Naive thymus-derived CD4-positive, alpha-beta T cell (primary cell): ENCODE measurements at regions of chr11 and their contacts with region 1.

Region 1: GRCh38 chr11:118198370-118198769 is 21.9 kb upstream of the SCN2B start:
- DNase-seq: peak; percentile 66 to 82 (median 75)
- ATAC-seq: peak; percentile 80
- H3K4me3 ChIP-seq: no peak overlapping the region
- H3K4me3 Mint-ChIP-seq: peak overlapping the region in 7 of 10 donors; percentile 12 to 53 (median 38)
- H3K27ac ChIP-seq: peak overlapping the region; percentile 10
- H3K27ac Mint-ChIP-seq: peak overlapping the region; percentile 16 to 84 (median 76)
- H3K4me1 ChIP-seq: peaks cover 28 to 47% of the 10 kb centered on the region in 2 donors
- H3K4me1 Mint-ChIP-seq: peaks cover 5 to 14% (median 11%) of the 10 kb centered on the region in 7 donors
- H3K27me3 ChIP-seq: no peaks in the 10 kb centered on the region
- H3K27me3 Mint-ChIP-seq: no peaks in the 10 kb centered on the region

Region 2: DNA sequence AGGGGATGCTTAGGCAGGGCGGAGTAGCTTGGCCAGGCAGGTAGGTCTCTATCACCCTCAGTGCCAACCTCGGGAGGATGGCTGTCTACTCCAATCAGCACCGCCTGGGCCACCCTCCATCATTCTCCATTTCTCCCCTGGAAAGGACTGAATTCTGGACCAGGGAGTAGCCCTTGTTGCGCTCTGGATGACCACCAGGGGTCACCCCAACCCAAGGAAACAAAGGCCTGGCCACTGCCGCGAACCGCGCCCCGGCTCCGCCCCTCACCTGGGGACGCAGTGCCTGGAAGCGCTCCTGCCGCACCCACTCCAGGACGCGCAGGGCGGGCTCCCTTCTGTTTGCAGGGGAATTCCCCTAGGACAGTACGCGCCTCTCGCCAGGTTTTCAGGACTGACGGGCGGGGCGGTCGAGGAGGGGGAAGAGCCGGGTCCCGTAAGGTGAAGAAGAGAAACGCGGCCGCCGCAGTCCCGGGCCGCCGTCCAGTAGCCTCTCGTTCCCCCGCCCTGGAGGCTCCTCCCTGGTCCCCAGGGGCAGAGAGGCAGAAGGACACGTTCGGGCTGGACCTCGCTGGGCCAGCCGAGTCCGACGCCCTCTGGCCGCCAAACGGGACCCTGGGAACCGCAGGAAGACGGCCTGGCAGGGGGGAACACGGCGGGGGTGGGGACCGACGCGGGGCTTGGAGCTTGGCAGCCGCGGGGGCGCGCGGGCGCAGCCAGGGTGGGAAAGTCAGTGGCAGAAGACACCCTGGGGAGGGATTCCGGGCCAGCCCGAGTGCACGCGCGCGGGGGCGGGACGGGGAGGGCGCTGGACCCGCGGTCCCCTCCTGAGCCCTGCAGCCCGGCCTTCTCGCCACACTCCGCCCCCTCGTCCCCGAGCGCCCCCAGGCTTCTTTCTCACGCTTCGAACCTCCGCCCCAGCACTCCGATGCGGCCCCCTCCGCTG is 52.8 kb before region 1 on chr11:
- CTCF ChIA-PET with region 1: no interaction called
- POLR2A ChIA-PET with region 1: no interaction called
- intact Hi-C with region 1: loop called in 1 of 2 experiments (anchors 1 kb)
- DNase-seq: peak; percentile 76 to 93 (median 81)
- ATAC-seq: peak; percentile 95
- H3K4me3 ChIP-seq: peak overlapping the region; percentile 66
- H3K4me3 Mint-ChIP-seq: peak overlapping the region; percentile 43 to 88 (median 83)
- H3K27ac ChIP-seq: no peak overlapping the region
- H3K27ac Mint-ChIP-seq: peak overlapping the region in 1 of 9 donors; percentile 35
- H3K4me1 ChIP-seq: no peaks in the 10 kb centered on the region
- H3K4me1 Mint-ChIP-seq: peaks cover 0 to 20% (median 5%) of the 10 kb centered on the region in 7 donors
- H3K27me3 ChIP-seq: peaks cover 0 to 5% of the 10 kb centered on the region in 2 donors
- H3K27me3 Mint-ChIP-seq: peaks cover 45 to 78% (median 56%) of the 10 kb centered on the region in 5 donors

Region 3: DNA sequence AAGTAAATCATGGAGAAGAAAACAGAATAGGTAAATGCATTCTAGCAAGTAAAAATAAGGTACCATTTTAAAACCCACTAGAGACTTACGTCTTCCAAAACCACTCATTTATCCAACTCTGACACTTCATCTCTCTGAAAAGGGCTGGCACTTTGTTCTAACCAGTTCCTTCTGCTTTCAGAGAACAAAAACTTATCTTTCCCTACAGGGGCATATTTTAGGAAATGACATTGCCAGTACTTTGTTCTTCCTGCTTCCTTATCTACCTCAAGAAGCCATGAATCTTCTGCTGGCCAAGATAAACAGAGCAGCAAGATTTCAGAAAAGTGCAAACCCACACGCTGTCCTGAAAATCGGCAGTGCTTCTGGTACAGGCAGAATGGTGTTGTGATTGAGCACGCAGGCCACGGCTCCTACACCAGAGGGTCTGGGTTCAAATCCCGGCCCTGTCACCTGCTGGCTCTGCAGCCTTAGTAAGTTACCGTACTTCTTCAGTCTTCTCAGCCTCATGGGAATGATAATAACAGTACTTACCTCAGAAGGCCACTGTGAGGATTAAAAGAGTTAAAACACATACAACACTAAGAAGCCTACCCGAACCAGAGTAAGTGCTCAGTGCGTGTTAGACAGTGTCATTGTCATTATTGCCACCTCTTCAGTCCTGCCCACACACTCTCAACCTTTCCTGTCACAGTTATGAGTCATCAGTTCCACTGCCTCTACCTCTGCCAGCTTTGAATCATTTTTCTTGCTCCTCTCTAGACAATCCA is 42.8 kb after region 1 on chr11:
- CTCF ChIA-PET with region 1: interaction called, 7 read pairs
- POLR2A ChIA-PET with region 1: interaction called, 4 read pairs
- intact Hi-C with region 1: loop called in 1 of 2 experiments (anchors 1 kb)
- DNase-seq: peak in 4 of 9 donors; percentile 45 to 75 (median 53)
- ATAC-seq: peak; percentile 91
- H3K4me3 ChIP-seq: peak overlapping the region; percentile 8
- H3K4me3 Mint-ChIP-seq: peak overlapping the region; percentile 27 to 74 (median 54)
- H3K27ac ChIP-seq: peak overlapping the region; percentile 49
- H3K27ac Mint-ChIP-seq: peak overlapping the region; percentile 52 to 93 (median 83)
- H3K4me1 ChIP-seq: peaks cover 33 to 50% of the 10 kb centered on the region in 2 donors
- H3K4me1 Mint-ChIP-seq: peaks cover 54 to 76% (median 70%) of the 10 kb centered on the region in 7 donors
- H3K27me3 ChIP-seq: no peaks in the 10 kb centered on the region
- H3K27me3 Mint-ChIP-seq: no peaks in the 10 kb centered on the region

Region 4: GRCh38 chr11:118277306-118277705 is 78.9 kb after region 1 on chr11:
- CTCF ChIA-PET with region 1: interaction called, 10 read pairs
- POLR2A ChIA-PET with region 1: interaction called, 4 read pairs
- intact Hi-C with region 1: no loop called
- DNase-seq: no peak
- ATAC-seq: no peak
- H3K4me3 ChIP-seq: no peak overlapping the region
- H3K4me3 Mint-ChIP-seq: no peak overlapping the region
- H3K27ac ChIP-seq: no peak overlapping the region
- H3K27ac Mint-ChIP-seq: no peak overlapping the region
- H3K4me1 ChIP-seq: peaks cover 0 to 5% of the 10 kb centered on the region in 2 donors
- H3K4me1 Mint-ChIP-seq: peaks cover 6 to 57% (median 30%) of the 10 kb centered on the region in 7 donors
- H3K27me3 ChIP-seq: no peaks in the 10 kb centered on the region
- H3K27me3 Mint-ChIP-seq: peaks cover 0 to 3% (median 0%) of the 10 kb centered on the region in 5 donors

Region 5: DNA sequence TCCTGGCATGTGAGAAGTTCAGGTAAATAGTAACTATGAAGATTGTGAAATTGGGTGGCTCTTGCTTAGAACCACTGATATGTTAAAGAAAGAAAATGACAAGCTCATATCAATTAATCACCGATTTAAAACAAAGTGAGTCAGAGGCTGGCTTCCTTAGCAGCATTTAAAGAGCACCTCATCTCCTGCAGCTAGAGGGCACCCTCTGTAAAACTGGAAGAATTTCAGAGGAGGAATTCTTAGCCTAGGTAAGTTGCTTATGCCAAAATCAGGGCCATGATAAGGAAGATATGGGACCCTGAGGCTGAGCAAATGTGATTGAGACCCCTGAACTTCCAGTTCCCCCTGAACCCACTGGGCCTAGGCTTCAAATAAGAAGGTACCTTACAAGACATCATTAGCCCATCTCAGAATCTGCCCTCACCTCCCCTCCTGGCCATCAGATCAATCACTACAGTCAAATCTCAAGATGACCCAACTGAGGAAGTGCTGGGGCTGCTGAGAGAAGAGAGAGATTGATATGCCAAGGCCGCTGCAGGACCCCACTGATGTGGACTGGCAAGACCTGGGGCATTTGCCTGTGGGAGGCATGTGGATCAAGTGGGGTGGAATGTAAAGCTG is 97.6 kb after region 1 on chr11:
- CTCF ChIA-PET with region 1: interaction called, 56 read pairs
- POLR2A ChIA-PET with region 1: interaction called, 8 read pairs
- intact Hi-C with region 1: loop called (anchors 1 kb)
- DNase-seq: peak in 7 of 9 donors; percentile 38 to 60 (median 52)
- ATAC-seq: peak; percentile 74
- H3K4me3 ChIP-seq: no peak overlapping the region
- H3K4me3 Mint-ChIP-seq: no peak overlapping the region
- H3K27ac ChIP-seq: peak overlapping the region; percentile 44
- H3K27ac Mint-ChIP-seq: peak overlapping the region; percentile 39 to 84 (median 61)
- H3K4me1 ChIP-seq: peaks cover 0 to 15% of the 10 kb centered on the region in 2 donors
- H3K4me1 Mint-ChIP-seq: peaks cover 13 to 34% (median 30%) of the 10 kb centered on the region in 7 donors
- H3K27me3 ChIP-seq: no peaks in the 10 kb centered on the region
- H3K27me3 Mint-ChIP-seq: no peaks in the 10 kb centered on the region

Region 6: DNA sequence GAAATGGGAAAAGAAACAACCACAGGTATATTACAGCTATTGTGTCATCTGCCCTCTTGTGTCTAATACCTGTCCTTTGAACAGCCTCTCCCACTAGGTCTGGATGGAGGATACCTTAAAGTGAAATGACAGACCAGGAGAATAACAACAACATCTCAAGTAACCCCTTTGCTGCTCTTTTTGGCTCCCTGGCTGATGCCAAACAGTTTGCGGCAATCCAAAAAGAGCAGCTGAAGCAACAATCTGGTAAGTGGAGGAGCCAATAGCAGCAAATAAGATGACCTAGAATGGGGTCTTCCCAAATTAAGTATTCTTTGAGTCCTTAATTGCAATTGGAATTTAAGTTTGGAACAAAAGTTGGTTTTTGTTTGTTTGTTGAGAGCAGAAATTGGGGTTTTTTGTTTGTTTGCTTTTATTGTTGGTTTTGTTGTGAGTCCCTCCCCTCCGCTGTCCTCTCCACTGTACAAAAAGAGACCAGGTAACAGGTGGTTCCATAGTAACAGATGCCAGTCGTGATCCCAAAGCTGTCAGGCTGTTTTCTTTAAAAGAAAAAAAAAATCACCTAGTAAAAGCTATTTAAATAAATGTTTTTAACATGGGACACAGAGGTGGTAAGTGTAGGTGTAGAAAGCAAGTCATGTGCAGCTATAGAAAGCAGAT is 166.7 kb after region 1 on chr11:
- CTCF ChIA-PET with region 1: interaction called, 11 read pairs
- POLR2A ChIA-PET with region 1: interaction called, 4 read pairs
- intact Hi-C with region 1: no loop called
- DNase-seq: no peak
- ATAC-seq: no peak
- H3K4me3 ChIP-seq: no peak overlapping the region
- H3K4me3 Mint-ChIP-seq: no peak overlapping the region
- H3K27ac ChIP-seq: no peak overlapping the region
- H3K27ac Mint-ChIP-seq: peak overlapping the region in 3 of 9 donors; percentile 7 to 59 (median 17)
- H3K4me1 ChIP-seq: peaks cover 16 to 22% of the 10 kb centered on the region in 2 donors
- H3K4me1 Mint-ChIP-seq: peaks cover 24 to 52% (median 37%) of the 10 kb centered on the region in 7 donors
- H3K27me3 ChIP-seq: no peaks in the 10 kb centered on the region
- H3K27me3 Mint-ChIP-seq: no peaks in the 10 kb centered on the region

Region 7: DNA sequence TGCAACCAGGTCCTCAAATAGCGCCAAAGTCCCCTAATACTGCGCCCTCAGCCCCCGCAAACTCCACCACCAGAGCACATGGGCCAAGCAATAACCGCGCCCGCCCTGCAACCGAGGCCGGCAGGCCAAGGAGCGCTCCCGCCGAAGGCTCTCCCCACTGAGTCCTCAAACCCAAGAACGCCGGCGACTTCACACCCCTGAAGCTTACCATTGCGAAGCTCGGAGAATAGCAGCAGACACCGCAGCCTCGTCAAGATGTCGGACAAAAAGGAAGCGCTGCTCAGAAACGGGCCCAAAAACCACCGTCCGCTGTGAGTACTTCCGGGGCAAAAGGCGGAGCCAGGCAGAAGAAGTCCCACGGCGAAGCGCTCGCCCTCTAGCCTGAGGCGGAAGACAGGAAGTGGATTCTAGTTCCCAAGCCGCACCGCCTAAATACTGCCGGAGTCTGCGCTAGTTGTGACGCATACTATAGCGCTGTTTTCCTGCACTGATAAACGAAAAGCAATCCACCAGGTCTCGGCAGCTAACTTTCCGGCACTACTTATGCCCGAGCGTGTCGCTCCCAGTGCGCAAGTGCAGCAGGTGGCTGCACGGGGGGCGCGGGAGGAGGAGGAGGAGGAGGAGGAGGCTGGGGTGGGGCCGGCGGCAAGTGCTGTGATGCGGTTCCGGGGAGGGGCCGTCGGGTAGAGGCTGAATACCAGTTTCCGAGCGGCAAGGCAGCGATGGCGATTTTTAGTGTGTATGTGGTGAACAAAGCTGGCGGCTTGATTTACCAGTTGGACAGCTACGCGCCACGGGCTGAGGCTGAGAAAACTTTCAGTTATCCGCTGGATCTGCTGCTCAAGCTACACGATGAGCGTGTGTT is 819.9 kb after region 1 on chr11 and contains the starts of genes RPS25 and TRAPPC4:
- CTCF ChIA-PET with region 1: no interaction called
- POLR2A ChIA-PET with region 1: no interaction called
- intact Hi-C with region 1: no loop called
- DNase-seq: peak; percentile 87 to 98 (median 96)
- ATAC-seq: peak; percentile 93
- H3K4me3 ChIP-seq: peak within 1 kb of the TSS; percentile 89
- H3K4me3 Mint-ChIP-seq: peak within 1 kb of the TSS; percentile 96 to 100 (median 98)
- H3K27ac ChIP-seq: peak within 1 kb of the TSS; percentile 98
- H3K27ac Mint-ChIP-seq: peak within 1 kb of the TSS; percentile 99 to 100 (median 100)
- H3K4me1 ChIP-seq: peaks cover 30 to 32% of the 10 kb centered on the region in 2 donors
- H3K4me1 Mint-ChIP-seq: peaks cover 21 to 75% (median 50%) of the 10 kb centered on the region in 7 donors
- H3K27me3 ChIP-seq: no peaks in the 10 kb centered on the region
- H3K27me3 Mint-ChIP-seq: no peaks in the 10 kb centered on the region
- total RNA-seq, gene RPS25: 1,535 to 3,042 (median 2,772) TPM
- total RNA-seq, gene TRAPPC4: 70.7 to 80.3 (median 77.8) TPM